Aorta (tissue), 5 donors: ENCODE measurements at regions of chr3 and their contacts with region 1.

Region 1: DNA sequence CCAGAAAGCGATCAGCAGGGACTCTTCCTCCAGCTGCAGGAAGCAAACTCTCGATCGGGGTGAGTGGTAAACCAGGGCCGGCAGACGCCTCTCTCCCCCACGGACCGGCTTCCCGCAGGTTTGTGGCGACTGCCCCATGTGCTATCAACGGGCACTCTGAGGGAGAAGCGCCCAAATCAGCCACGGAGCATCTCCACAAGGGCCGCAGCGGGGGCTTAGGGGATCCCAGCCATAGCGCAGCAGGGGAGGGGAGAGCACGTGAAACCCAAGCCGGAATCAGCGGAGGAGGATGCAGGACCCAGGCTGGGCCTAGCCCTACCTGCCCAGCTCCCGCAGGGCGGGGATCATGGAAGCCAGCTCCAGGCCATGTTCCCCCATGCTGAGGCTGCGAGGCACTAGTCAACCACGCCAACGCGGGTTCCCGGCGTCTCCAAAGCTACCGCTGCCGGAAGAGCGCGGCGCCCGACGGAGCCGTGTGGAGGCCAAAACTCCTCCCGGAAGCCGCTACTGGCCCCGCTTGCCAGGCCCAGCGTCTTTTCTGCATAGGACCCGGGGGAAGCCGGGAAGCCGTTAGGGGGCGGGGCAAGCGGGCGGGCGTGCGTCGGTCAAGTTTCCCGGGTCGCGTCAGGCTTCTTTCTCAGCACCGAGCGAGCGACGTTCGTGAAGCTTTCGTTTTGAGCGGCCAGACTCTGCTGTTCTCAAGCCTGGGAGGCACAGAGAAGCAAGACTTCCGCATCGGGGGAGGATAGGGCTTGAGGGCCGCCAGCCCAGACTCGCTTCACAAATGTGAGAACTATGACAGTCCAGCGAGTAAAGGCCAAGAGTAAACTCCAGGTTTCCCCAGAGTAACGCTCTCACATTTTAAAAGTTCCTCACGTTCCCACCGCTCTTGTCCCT is at the start of gene ATR:
- DNase-seq: peak; percentile 99
- ATAC-seq: peak; percentile 100
- H3K4me3 ChIP-seq: peak within 1 kb of the TSS; percentile 67 to 94
- H3K27ac ChIP-seq: peak within 1 kb of the TSS; percentile 91 to 93
- H3K4me1 ChIP-seq: peaks cover 0 to 5% of the 10 kb centered on the region in 2 donors
- H3K27me3 ChIP-seq: no peaks in the 10 kb centered on the region
- total RNA-seq, gene ATR: 21.1 to 30.0 TPM

Region 2: DNA sequence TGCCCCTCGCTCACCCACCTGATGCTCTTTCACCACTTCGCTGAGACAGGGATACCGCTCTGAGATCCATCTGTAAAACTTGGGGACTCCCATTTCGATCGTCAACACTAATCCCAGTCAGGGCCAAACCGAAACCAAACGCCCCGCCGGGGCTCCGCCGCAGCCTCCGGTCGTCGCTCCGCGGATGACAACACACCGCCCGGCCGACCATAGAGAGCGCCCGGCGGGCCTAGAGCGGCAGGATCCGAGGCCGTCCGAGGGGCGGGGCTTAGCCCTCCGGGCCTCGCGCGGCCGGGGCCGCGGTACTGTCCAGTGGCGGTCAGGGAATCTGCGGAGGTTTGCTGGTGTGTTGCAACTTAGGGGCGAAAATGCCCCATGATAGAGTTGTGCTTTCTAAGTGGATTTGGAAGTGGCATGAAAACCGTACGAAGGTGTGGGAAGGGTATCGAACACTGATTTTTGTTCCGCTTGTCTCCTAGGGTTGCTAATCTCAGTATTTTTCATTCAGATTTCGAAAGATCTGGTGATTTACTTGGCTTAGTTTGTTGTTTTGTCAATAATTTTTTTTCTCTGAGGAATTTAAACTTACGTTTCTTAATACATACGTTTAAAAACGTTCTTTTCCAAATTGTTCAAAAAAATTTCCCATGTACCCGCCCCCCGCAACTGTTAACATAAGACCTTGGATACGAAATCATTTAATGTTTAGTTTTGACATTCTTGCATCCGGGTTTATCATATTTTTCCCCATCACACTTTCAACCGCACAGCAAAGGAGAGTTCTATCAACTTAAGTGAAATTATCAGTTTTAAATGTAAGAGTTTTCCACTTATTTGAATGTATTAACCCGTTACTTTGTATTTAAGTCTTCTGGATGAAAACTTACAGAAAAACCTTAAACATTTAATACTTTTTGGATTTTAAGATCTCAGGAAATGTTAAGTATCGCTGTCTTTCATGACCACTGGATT is 130.4 kb before region 1 on chr3 and contains the start of gene XRN1:
- intact Hi-C with region 1: loop called in 1 of 2 experiments (anchors 5 kb)
- DNase-seq: peak; percentile 98 to 99
- ATAC-seq: peak; percentile 100
- H3K4me3 ChIP-seq: peak within 1 kb of the TSS; percentile 94 to 98
- H3K27ac ChIP-seq: peak within 1 kb of the TSS; percentile 51 to 92
- H3K4me1 ChIP-seq: peaks cover 3 to 8% of the 10 kb centered on the region in 2 donors
- H3K27me3 ChIP-seq: no peaks in the 10 kb centered on the region
- total RNA-seq, gene XRN1: 50.9 to 71.8 TPM

Region 3: GRCh38 chr3:142608645-142609535 is 30.3 kb after region 1 on chr3:
- intact Hi-C with region 1: no loop called
- DNase-seq: no peak
- ATAC-seq: no peak
- H3K4me3 ChIP-seq: no peak overlapping the region
- H3K27ac ChIP-seq: no peak overlapping the region
- H3K4me1 ChIP-seq: no peaks in the 10 kb centered on the region
- H3K27me3 ChIP-seq: no peaks in the 10 kb centered on the region

Region 4: GRCh38 chr3:142723968-142724681 is 145.6 kb after region 1 on chr3 and contains the start of gene TRPC1:
- intact Hi-C with region 1: loop called (anchors 5 kb)
- DNase-seq: peak; percentile 80 to 89
- ATAC-seq: peak; percentile 93
- H3K4me3 ChIP-seq: peak within 1 kb of the TSS; percentile 91 to 95
- H3K27ac ChIP-seq: peak within 1 kb of the TSS; percentile 20 to 98
- H3K4me1 ChIP-seq: no peaks in the 10 kb centered on the region
- H3K27me3 ChIP-seq: no peaks in the 10 kb centered on the region
- total RNA-seq, gene TRPC1: 25.5 to 29.2 TPM

Region 5: GRCh38 chr3:142828703-142829305 is 250.2 kb after region 1 on chr3:
- intact Hi-C with region 1: loop called in 1 of 2 experiments (anchors 10 kb)
- DNase-seq: peak; percentile 86 to 93
- ATAC-seq: peak; percentile 92
- H3K4me3 ChIP-seq: no peak overlapping the region
- H3K27ac ChIP-seq: no peak overlapping the region
- H3K4me1 ChIP-seq: no peaks in the 10 kb centered on the region
- H3K27me3 ChIP-seq: no peaks in the 10 kb centered on the region

Region 6: GRCh38 chr3:143001369-143002082 is 423.0 kb after region 1 on chr3 and contains the start of gene U2SURP:
- intact Hi-C with region 1: loop called in 1 of 2 experiments (anchors 5 kb)
- DNase-seq: peak; percentile 97 to 98
- ATAC-seq: peak; percentile 99
- H3K4me3 ChIP-seq: peak within 1 kb of the TSS; percentile 80 to 94
- H3K27ac ChIP-seq: peak within 1 kb of the TSS; percentile 65 to 89
- H3K4me1 ChIP-seq: peaks cover 0 to 2% of the 10 kb centered on the region in 2 donors
- H3K27me3 ChIP-seq: no peaks in the 10 kb centered on the region
- total RNA-seq, gene U2SURP: 84.0 to 102 TPM